ENCODE measurements at regions of chr14 and their contacts with region 1.

Region 1: DNA sequence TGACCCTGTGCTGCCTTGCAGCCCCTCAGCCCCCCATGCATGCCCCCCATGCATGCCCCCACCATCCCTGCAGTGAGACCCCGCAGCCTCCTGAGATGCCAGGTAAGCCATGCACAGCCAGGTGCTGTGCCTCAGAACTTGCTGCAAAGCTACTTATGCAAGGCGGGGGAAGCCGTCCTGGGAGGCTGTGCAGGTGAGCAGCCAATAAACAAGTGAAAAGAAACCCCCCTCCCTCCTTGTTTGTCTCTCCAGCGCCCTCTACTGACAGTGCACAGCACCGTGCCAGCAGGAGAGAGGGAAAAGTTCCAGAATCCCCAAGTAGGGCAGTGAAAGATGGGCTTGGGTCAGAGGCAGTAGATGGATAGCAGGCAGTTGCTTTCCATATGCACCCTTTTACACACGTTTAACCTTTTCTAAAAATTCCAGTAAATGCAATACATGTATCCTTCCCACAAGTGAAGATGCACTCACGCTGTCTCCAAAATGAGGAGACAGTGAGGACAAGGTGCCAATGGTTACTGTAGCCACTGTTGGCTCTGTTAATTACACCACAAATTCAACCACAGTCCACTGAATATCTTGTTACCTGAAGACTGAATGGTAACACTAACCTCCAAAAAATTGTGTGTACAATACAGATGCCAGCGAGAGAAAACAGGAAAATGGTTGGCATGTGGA is 18.0 kb downstream of the TNFAIP2 start:
- DNase-seq: peak; percentile 65 to 89
- H3K4me3 ChIP-seq: no peak overlapping the region
- H3K27ac ChIP-seq: no peak overlapping the region
- H3K4me1 ChIP-seq: peaks cover 0 to 11% (median 6%) of the 10 kb centered on the region in 4 experiments; a peak in 6 of 7 replicates
- H3K27me3 ChIP-seq: peaks cover 0 to 23% (median 11%) of the 10 kb centered on the region in 4 experiments; a peak in 6 of 7 replicates
- CTCF ChIP-seq: peak in 2 of 3 experiments; percentile 91 to 96; a peak in 3 of 4 replicates
- EP300 ChIP-seq: no peak
- POLR2A ChIP-seq: no peak
- RAD21 ChIP-seq: peak; percentile 46 to 73

Region 2: GRCh38 chr14:103091041-103091882 is 50.0 kb before region 1 on chr14:
- CTCF ChIA-PET with region 1: interaction called, 17 read pairs
- POLR2A ChIA-PET with region 1: no interaction called
- DNase-seq: peak in 1 of 2 experiments; percentile 76
- H3K4me3 ChIP-seq: peak overlapping the region; percentile 18 to 59 (median 30); a peak in 7 of 8 replicates
- H3K27ac ChIP-seq: no peak overlapping the region
- H3K4me1 ChIP-seq: peaks cover 2 to 13% (median 4%) of the 10 kb centered on the region in 4 experiments; a peak in 6 of 7 replicates
- H3K27me3 ChIP-seq: peaks cover 0 to 12% (median 6%) of the 10 kb centered on the region in 4 experiments; a peak in 4 of 7 replicates
- CTCF ChIP-seq: peak in 2 of 3 experiments; percentile 36 to 43; a peak in 3 of 4 replicates
- EP300 ChIP-seq: no peak
- POLR2A ChIP-seq: no peak
- RAD21 ChIP-seq: peak in 1 of 2 experiments; percentile 32; a peak in 1 of 4 replicates

Region 3: GRCh38 chr14:103121846-103122584 is 19.2 kb before region 1 on chr14:
- CTCF ChIA-PET with region 1: interaction called, 80 read pairs
- POLR2A ChIA-PET with region 1: interaction called, 26 read pairs
- DNase-seq: peak in 1 of 2 experiments; percentile 80
- H3K4me3 ChIP-seq: peak overlapping the region in 3 of 4 experiments; percentile 21 to 62 (median 32); a peak in 5 of 8 replicates
- H3K27ac ChIP-seq: no peak overlapping the region
- H3K4me1 ChIP-seq: peaks cover 0 to 35% (median 25%) of the 10 kb centered on the region in 4 experiments; a peak in 6 of 7 replicates
- H3K27me3 ChIP-seq: peaks cover 0 to 36% (median 26%) of the 10 kb centered on the region in 4 experiments; a peak in 6 of 7 replicates
- CTCF ChIP-seq: no peak
- EP300 ChIP-seq: no peak
- POLR2A ChIP-seq: no peak
- RAD21 ChIP-seq: no peak

Region 4: DNA sequence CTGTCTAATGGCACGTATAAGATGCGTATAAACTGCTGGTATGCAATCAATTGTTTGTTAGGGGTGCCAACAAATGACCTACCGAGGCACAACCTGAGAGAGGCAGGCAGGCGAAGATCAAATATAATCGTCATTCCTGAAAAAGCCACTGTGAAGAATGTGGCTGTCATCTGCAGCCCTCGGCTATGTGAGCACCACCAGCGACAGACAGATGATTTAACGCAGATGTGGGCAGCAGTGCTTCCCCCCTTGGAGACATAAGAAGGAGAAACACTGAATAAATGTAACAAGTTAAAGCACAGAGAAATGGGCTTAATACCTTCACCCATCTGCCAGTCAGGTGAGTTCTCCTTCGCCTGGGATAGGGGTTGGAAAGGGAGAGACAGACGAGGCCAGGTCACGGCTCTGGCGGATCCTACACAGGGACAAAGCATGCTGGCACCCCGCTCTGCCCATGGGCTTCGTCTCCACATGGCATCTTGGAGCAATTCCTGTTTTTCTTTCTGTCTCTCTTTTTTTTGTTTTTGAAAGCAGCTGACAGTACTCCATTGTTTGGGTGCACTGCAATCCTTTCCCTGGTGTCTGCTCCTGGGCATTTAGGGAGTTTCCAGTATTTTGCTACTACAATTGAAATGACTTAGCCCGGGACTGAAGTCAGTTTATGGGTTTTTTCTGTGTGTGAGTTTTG is 10.1 kb after region 1 on chr14:
- CTCF ChIA-PET with region 1: interaction called, 18 read pairs
- POLR2A ChIA-PET with region 1: interaction called, 4 read pairs
- DNase-seq: no peak
- H3K4me3 ChIP-seq: no peak overlapping the region
- H3K27ac ChIP-seq: no peak overlapping the region
- H3K4me1 ChIP-seq: no peaks in the 10 kb centered on the region
- H3K27me3 ChIP-seq: no peaks in the 10 kb centered on the region
- CTCF ChIP-seq: no peak
- EP300 ChIP-seq: no peak
- POLR2A ChIP-seq: no peak
- RAD21 ChIP-seq: no peak

Region 5: DNA sequence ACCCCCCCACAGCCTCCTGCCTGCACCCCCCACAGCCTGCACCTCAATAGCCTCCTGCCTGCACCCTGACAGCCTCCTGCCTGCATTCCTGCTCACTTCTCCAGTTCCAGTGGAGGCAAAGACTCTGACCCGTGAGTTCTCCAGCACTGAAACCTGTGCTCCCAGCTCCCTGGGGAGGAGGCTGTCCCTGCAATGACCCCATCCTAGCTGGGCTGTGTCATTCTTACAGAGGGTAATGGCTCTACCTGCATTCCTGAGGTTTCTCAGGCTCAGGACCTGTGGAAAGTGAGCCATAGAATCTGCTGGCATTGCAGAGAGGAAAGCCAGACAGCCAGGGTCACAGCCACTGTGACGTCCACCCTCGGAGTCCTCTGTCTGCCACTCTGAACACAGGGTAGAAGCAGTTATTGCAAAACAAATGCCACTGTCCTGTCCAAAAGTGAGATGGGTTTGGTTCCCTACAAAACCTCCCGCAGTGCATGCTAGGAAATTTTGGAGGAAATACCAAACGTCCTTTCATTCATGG is 19.7 kb after region 1 on chr14:
- CTCF ChIA-PET with region 1: interaction called, 18 read pairs
- POLR2A ChIA-PET with region 1: interaction called, 4 read pairs
- DNase-seq: no peak
- H3K4me3 ChIP-seq: no peak overlapping the region
- H3K27ac ChIP-seq: no peak overlapping the region
- H3K4me1 ChIP-seq: peaks cover 0 to 5% (median 4%) of the 10 kb centered on the region in 4 experiments; a peak in 3 of 7 replicates
- H3K27me3 ChIP-seq: no peaks in the 10 kb centered on the region
- CTCF ChIP-seq: no peak
- EP300 ChIP-seq: no peak
- POLR2A ChIP-seq: no peak
- RAD21 ChIP-seq: no peak

Measured in H1 (cell line).